Posterior vena cava (tissue), 2 donors: ENCODE measurements at regions of chr17 and their contacts with region 1.

Region 1: DNA sequence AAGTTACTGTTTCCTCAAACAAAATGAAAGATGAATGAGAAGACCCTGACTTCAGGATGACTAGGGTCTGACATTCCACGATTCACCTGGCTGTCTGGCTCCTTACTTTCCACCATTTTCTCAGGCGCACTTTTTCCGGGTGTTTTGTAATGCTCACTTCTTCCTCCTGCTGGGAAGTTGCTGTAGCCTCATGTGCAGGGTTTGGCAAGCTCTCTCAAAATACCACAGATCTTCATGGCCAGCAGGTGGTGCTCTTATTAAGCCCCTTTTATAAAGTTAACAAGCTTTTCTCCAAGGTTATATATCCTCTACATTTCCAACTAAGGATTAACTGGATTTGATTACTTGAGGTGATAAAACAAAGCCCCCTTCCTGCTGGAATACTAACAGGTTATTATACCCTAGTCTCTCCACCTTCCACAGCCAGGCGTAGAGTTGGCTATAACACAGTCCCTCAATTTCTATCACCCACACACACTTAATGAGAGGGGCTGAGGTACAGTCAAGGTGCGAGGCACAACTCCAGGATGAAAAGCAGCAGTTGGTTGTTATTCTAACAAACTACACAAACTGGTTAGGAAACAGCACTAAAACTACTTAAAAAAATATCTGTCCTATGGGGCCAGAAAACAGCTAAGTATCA is 45.4 kb downstream of the STH start:
- DNase-seq: no peak

Region 2: GRCh38 chr17:46193626-46194392 is 149.4 kb after region 1 on chr17:
- intact Hi-C with region 1: loop called in 1 of 2 experiments (anchors 5 kb)
- DNase-seq: peak; percentile 100

Region 3: GRCh38 chr17:46212634-46213435 is 168.4 kb after region 1 on chr17:
- intact Hi-C with region 1: loop called in 1 of 2 experiments (anchors 5 kb)
- DNase-seq: no peak